Activated CD4-positive, alpha-beta memory T cell treated with anti-CD3 and anti-CD28 coated beads for 36 hours (primary cell): ENCODE measurements at regions of chr1 and their contacts with region 1.

Region 1: DNA sequence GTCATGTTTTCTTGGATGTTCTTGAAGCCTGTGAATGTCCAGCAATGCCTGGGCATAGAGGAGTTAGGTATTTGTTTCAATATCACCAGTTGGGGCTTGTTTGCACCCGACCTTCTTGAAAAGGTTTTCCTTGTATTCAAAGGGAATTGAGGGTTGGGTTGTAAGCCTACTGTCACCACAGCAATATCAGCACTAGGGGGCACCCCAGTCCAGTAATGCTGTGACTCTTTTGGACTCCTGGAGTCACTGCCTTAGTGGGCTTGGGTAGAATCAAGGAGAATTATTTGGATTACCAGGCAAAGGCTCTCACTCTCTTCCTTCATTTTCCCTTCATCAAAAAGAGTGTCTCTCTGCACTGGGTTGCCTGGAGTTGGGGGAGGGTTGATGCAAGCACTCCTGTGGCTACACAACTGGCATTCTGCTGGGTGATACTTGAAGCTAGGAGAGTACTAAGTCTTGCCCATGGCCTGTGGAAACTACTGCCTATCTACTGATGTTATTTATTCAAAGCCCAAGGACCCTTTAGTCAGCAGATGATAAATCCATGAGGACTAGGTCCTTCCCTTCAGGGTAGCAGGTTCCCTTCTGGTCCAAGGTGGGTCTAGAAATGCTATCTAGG is 34.5 kb downstream of the OR10R2 start:
- DNase-seq: peak; percentile 56
- H3K4me3 Mint-ChIP-seq: no peak overlapping the region
- H3K27ac Mint-ChIP-seq: no peak overlapping the region
- H3K4me1 Mint-ChIP-seq: no peaks in the 10 kb centered on the region
- H3K27me3 Mint-ChIP-seq: peaks cover 22% of the 10 kb centered on the region

Region 2: GRCh38 chr1:158434741-158435140 is 71.7 kb before region 1 on chr1:
- CTCF ChIA-PET with region 1: no interaction called
- POLR2A ChIA-PET with region 1: no interaction called
- intact Hi-C with region 1: no loop called
- DNase-seq: no peak
- H3K4me3 Mint-ChIP-seq: no peak overlapping the region
- H3K27ac Mint-ChIP-seq: no peak overlapping the region
- H3K4me1 Mint-ChIP-seq: no peaks in the 10 kb centered on the region
- H3K27me3 Mint-ChIP-seq: peaks cover 36% of the 10 kb centered on the region

Region 3: DNA sequence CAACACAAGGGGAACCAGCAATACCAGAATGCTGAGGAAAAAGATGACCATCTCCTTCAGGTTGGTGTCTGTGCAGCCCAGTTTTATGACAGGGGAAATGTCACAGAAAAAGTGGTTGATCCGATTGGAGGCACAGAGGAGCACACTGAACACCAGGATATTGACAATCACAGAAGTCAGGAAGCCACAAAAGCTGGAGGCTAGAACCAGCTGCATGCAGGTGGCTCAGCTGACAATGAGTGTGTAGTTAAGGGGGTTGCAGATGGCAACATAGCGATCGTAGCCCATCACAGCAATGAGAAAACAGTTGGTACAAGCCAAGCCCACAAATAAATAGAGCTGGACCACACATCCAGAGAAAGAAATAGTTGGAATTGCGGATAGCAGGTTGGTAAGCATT is 61.1 kb before region 1 on chr1:
- CTCF ChIA-PET with region 1: no interaction called
- POLR2A ChIA-PET with region 1: no interaction called
- intact Hi-C with region 1: no loop called
- DNase-seq: no peak
- H3K4me3 Mint-ChIP-seq: no peak overlapping the region
- H3K27ac Mint-ChIP-seq: no peak overlapping the region
- H3K4me1 Mint-ChIP-seq: no peaks in the 10 kb centered on the region
- H3K27me3 Mint-ChIP-seq: peaks cover 18% of the 10 kb centered on the region

Region 4: GRCh38 chr1:158471920-158472319 is 34.6 kb before region 1 on chr1 and contains the start of gene OR10R2:
- CTCF ChIA-PET with region 1: no interaction called
- POLR2A ChIA-PET with region 1: no interaction called
- intact Hi-C with region 1: no loop called
- DNase-seq: no peak
- H3K4me3 Mint-ChIP-seq: no peak within 1 kb of the TSS
- H3K27ac Mint-ChIP-seq: no peak within 1 kb of the TSS
- H3K4me1 Mint-ChIP-seq: no peaks in the 10 kb centered on the region
- H3K27me3 Mint-ChIP-seq: peaks cover 13% of the 10 kb centered on the region
- total RNA-seq, gene OR10R2: not detected

Region 5: GRCh38 chr1:159207774-159208173 is 701.3 kb after region 1 on chr1:
- CTCF ChIA-PET with region 1: no interaction called
- POLR2A ChIA-PET with region 1: no interaction called
- intact Hi-C with region 1: loop called (anchors 10 kb)
- DNase-seq: no peak
- H3K4me3 Mint-ChIP-seq: no peak overlapping the region
- H3K27ac Mint-ChIP-seq: no peak overlapping the region
- H3K4me1 Mint-ChIP-seq: peaks cover 20% of the 10 kb centered on the region
- H3K27me3 Mint-ChIP-seq: peaks cover 55% of the 10 kb centered on the region